Heart left ventricle (tissue), 16 donors: ENCODE measurements at regions of chr11 and their contacts with region 1.

Region 1: GRCh38 chr11:46392421-46393230 is 1.1 kb upstream of the CHRM4 start:
- DNase-seq: peak; percentile 83 to 93 (median 90)
- ATAC-seq: peak; percentile 90 to 92 (median 90)
- H3K4me3 ChIP-seq: peak overlapping the region; percentile 7 to 55 (median 44)
- H3K27ac ChIP-seq: no peak overlapping the region
- H3K4me1 ChIP-seq: peaks cover 0 to 51% (median 28%) of the 10 kb centered on the region in 12 donors
- H3K27me3 ChIP-seq: peaks cover 11 to 51% (median 27%) of the 10 kb centered on the region in 9 donors
- CTCF ChIP-seq: no peak
- POLR2A ChIP-seq: no peak

Region 2: DNA sequence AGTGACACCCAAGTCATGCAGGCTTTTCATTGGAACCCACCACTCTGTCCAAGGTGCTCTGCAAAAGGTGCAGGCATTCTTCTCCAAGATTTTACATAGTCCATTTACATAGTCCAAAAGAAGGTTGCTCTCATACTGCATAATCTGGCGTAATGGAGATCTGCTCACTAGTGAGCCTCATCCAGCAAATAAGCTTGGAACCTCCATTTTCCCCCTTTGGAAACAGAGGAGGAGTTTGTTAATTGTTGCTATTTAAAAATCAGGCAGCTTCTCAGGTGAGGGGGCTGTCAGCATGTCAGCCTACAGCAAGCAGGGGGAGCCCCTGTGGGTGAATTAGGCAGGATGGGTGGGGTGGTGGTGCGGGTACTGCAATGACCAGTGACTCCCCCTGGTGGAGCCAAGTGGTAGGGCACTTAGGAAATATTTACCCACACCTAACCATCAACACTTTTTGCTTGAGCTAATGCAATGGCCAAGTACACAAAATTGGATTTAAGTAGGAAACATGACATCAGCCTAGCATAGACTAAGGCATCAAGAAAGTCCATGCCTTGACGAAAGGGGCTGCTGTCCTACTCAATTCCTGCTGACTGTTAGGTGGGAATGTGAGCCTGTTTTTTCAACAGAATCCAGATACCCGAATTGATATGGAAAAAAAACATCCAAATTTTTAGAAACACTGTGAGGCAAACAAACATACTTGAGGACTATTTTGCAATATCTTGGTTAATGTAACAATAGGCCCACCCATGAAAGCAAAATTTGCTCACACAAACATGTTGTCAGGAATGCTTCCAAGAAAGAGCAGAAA is 136.7 kb after region 1 on chr11:
- intact Hi-C with region 1: loop called in 5 of 10 experiments (anchors 2 to 5 kb)
- DNase-seq: peak; percentile 61 to 70 (median 68)
- ATAC-seq: peak in 3 of 4 donors; percentile 80 to 87 (median 81)
- H3K4me3 ChIP-seq: no peak overlapping the region
- H3K27ac ChIP-seq: peak overlapping the region in 1 of 12 donors; percentile 4
- H3K4me1 ChIP-seq: peaks cover 0 to 37% (median 21%) of the 10 kb centered on the region in 12 donors
- H3K27me3 ChIP-seq: no peaks in the 10 kb centered on the region
- CTCF ChIP-seq: peak; percentile 86 to 96 (median 92)
- POLR2A ChIP-seq: no peak

Region 3: GRCh38 chr11:46537537-46538295 is 145.1 kb after region 1 on chr11:
- intact Hi-C with region 1: loop called in 7 of 10 experiments (anchors 1 to 5 kb)
- DNase-seq: peak in 4 of 5 donors; percentile 53 to 63 (median 60)
- ATAC-seq: peak; percentile 46 to 78 (median 74)
- H3K4me3 ChIP-seq: no peak overlapping the region
- H3K27ac ChIP-seq: no peak overlapping the region
- H3K4me1 ChIP-seq: peaks cover 0 to 26% (median 8%) of the 10 kb centered on the region in 12 donors
- H3K27me3 ChIP-seq: no peaks in the 10 kb centered on the region
- CTCF ChIP-seq: peak; percentile 80 to 94 (median 90)
- POLR2A ChIP-seq: no peak

Region 4: DNA sequence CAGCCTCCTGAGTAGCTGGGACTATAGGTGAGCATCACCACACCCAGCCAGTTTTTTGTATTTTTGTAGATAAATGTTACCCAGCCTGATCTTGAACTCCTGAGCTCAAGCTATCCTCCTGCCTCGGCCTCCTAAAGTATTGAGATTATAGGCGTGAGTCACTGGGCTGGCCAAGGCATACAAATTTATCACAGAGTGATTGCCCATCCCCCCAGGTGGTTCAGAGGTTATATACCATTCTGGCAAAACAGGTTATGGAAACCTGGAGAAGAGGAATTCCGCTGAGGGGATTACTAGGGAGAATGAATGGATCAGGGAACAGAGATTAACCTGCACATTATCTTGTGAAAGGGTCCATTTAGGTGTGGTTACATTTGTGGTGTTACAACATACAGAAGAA is 232.8 kb after region 1 on chr11:
- intact Hi-C with region 1: no loop called
- DNase-seq: no peak
- ATAC-seq: no peak
- H3K4me3 ChIP-seq: no peak overlapping the region
- H3K27ac ChIP-seq: no peak overlapping the region
- H3K4me1 ChIP-seq: peaks cover 0 to 10% (median 2%) of the 10 kb centered on the region in 12 donors
- H3K27me3 ChIP-seq: no peaks in the 10 kb centered on the region
- CTCF ChIP-seq: no peak
- POLR2A ChIP-seq: no peak